ENCODE measurements at regions of chr10 and their contacts with region 1.

Region 1: DNA sequence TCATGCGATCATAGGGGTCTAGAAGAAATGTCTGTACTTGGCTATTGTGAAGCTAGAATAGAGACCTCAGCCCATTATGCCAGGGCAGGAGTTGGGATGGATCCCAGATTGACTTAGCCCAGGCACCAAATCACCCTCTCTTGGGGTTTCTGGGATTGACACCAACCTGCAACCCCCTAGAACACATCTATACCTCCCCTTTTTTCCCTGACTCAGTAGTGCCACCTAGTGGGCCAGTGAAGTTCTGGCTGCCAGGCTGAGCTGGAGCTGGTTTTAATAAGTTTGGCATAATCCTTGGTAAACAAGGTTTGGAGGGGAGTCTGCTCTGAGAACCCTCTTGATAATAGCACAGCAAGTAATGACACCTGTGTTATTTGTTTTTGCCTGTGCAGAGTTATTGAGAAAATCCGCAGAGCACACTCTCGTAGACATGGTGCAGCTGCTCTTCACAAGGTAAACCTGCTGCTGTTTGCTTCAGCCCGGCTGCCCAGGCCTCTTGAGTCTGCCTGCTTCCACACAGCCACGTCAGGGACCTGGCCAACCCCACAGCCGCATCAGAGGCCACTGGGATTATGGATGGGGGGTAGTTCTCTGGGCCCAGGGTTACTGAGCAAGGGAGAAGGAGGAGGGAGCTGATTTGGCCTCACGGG is 43.3 kb upstream of the NFKB2 start:
- DNase-seq: peak; percentile 43 to 81 (median 75)
- ATAC-seq: peak; percentile 88
- H3K4me3 ChIP-seq: no peak overlapping the region
- H3K4me3 Mint-ChIP-seq: no peak overlapping the region
- H3K27ac ChIP-seq: no peak overlapping the region
- H3K27ac Mint-ChIP-seq: no peak overlapping the region
- H3K4me1 ChIP-seq: no peaks in the 10 kb centered on the region
- H3K4me1 Mint-ChIP-seq: no peaks in the 10 kb centered on the region
- H3K27me3 ChIP-seq: no peaks in the 10 kb centered on the region
- H3K27me3 Mint-ChIP-seq: no peaks in the 10 kb centered on the region
- CTCF ChIP-seq: peak; percentile 97

Region 2: GRCh38 chr10:102009801-102010425 is 342.3 kb before region 1 on chr10:
- CTCF ChIA-PET with region 1: no interaction called
- POLR2A ChIA-PET with region 1: no interaction called
- intact Hi-C with region 1: no loop called
- DNase-seq: peak in 7 of 9 experiments; percentile 19 to 72 (median 35)
- ATAC-seq: peak; percentile 94
- H3K4me3 ChIP-seq: no peak overlapping the region
- H3K4me3 Mint-ChIP-seq: no peak overlapping the region
- H3K27ac ChIP-seq: no peak overlapping the region
- H3K27ac Mint-ChIP-seq: no peak overlapping the region
- H3K4me1 ChIP-seq: no peaks in the 10 kb centered on the region
- H3K4me1 Mint-ChIP-seq: peaks cover 2% of the 10 kb centered on the region
- H3K27me3 ChIP-seq: no peaks in the 10 kb centered on the region
- H3K27me3 Mint-ChIP-seq: no peaks in the 10 kb centered on the region
- CTCF ChIP-seq: peak; percentile 82

Region 3: DNA sequence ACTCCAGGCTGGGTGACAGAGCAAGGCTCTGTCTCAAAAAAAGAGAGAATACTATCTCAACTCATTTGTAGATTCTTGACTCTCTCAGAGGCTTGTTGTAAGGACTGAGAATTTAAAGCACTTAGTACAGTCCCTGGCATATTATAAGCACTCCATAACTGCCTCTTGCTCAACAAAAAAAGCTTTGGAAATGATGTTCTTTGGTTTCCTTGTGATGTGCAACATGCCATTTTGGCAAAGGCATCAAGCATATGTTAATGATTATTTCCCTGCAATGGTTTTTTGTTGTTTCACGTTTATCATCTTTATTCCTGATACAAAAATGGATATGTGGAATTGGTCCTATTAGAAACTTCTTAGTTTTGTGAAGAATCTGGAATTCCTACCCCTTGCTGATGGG is 184.3 kb before region 1 on chr10:
- CTCF ChIA-PET with region 1: interaction called, 36 read pairs
- POLR2A ChIA-PET with region 1: no interaction called
- intact Hi-C with region 1: loop called (anchors 1 kb)
- DNase-seq: no peak
- ATAC-seq: no peak
- H3K4me3 ChIP-seq: no peak overlapping the region
- H3K4me3 Mint-ChIP-seq: no peak overlapping the region
- H3K27ac ChIP-seq: no peak overlapping the region
- H3K27ac Mint-ChIP-seq: no peak overlapping the region
- H3K4me1 ChIP-seq: peaks cover 4% of the 10 kb centered on the region
- H3K4me1 Mint-ChIP-seq: peaks cover 6% of the 10 kb centered on the region
- H3K27me3 ChIP-seq: peaks cover 0 to 3% of the 10 kb centered on the region in 2 experiments
- H3K27me3 Mint-ChIP-seq: no peaks in the 10 kb centered on the region
- CTCF ChIP-seq: no peak

Region 4: GRCh38 chr10:102220612-102221011 is 131.6 kb before region 1 on chr10:
- CTCF ChIA-PET with region 1: interaction called, 375 read pairs
- POLR2A ChIA-PET with region 1: no interaction called
- intact Hi-C with region 1: no loop called
- DNase-seq: no peak
- ATAC-seq: no peak
- H3K4me3 ChIP-seq: no peak overlapping the region
- H3K4me3 Mint-ChIP-seq: no peak overlapping the region
- H3K27ac ChIP-seq: no peak overlapping the region
- H3K27ac Mint-ChIP-seq: no peak overlapping the region
- H3K4me1 ChIP-seq: peaks cover 2% of the 10 kb centered on the region
- H3K4me1 Mint-ChIP-seq: peaks cover 1% of the 10 kb centered on the region
- H3K27me3 ChIP-seq: no peaks in the 10 kb centered on the region
- H3K27me3 Mint-ChIP-seq: peaks cover 10% of the 10 kb centered on the region
- CTCF ChIP-seq: no peak

Region 5: DNA sequence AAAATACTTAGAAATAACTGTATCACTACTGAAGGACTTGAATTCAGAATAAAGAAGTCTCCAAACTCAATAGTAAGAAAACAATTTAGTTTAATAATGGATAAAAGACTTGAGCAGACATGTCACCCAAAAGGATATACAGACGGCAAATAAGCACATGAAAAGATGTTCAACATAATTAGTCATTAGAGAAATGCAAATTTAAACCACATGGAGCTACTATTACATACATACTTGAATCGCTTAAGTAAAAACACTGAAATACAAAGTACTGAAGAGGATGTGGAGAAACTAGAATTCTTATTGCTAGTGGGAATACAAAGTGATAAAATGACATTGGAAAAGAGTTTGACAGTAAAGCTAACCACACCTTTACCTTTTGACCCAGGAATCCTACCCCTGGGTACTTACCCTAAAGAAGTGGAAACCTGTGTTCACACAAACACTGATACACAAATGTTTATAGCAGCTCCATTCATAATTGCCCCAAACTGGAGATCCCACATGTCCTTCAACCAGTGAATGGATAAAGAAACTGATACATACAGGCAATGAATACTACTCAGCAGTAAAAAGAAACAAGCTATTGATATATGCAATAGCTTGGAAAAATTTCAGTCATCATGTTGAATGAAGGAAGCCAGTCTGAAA is 11.0 kb before region 1 on chr10:
- CTCF ChIA-PET with region 1: interaction called, 16 read pairs
- POLR2A ChIA-PET with region 1: no interaction called
- intact Hi-C with region 1: no loop called
- DNase-seq: no peak
- ATAC-seq: no peak
- H3K4me3 ChIP-seq: no peak overlapping the region
- H3K4me3 Mint-ChIP-seq: no peak overlapping the region
- H3K27ac ChIP-seq: no peak overlapping the region
- H3K27ac Mint-ChIP-seq: no peak overlapping the region
- H3K4me1 ChIP-seq: no peaks in the 10 kb centered on the region
- H3K4me1 Mint-ChIP-seq: no peaks in the 10 kb centered on the region
- H3K27me3 ChIP-seq: no peaks in the 10 kb centered on the region
- H3K27me3 Mint-ChIP-seq: no peaks in the 10 kb centered on the region
- CTCF ChIP-seq: no peak

Measured in CD8-positive, alpha-beta T cell (primary cell).